Mammary epithelial cell (primary cell): ENCODE measurements at regions of chr6 and their contacts with region 1.

Region 1: GRCh38 chr6:4155848-4156466 is 20.6 kb upstream of the ECI2 start:
- DNase-seq: peak; percentile 78
- H3K4me3 ChIP-seq: no peak overlapping the region
- H3K27ac ChIP-seq: no peak overlapping the region
- H3K4me1 ChIP-seq: peaks cover 5% of the 10 kb centered on the region
- H3K27me3 ChIP-seq: no peaks in the 10 kb centered on the region
- CTCF ChIP-seq: peak; percentile 78 to 79

Region 2: DNA sequence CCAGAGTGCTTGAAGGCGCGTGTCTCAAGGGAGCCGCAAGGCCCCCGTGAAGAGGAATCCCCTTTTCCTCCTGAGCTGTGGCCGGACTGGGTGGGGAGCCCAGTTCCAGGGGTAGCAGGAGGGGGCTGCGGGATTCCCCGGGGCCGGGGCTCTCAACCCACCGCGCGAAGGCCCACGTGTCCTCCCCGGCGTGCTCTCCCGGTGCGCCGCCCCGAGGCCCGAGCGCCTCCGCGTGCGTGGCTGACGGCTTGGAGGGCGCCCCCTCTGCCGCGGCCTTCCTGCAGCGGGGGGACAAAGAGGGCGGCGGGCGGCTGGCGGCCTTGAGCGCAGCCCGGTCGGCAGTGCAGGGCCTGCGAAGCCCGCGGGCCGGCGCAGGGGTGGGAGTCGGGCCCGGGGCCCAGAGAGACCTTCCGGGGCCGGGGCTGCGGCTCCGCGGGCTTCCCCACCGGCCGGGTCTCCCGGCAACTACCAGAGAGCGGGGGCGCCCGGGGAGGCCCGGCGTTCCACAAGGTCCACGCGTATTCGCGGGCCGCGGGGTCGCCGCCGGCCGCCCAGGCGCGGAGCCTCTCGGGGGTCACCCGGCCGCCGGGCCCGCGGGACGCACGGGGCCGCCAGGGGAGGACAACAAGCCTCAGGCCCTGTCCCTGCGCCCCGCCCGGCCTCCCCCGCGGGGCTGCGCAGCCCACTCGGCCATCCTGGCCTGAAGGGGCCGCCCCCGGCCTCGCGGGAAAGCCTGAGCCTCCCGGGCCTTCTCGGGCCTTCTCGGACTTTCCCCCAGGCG is 77.1 kb before region 1 on chr6 and contains the start of gene FAM217A:
- CTCF ChIA-PET with region 1: no interaction called
- dilution Hi-C with region 1: no loop called
- in situ Hi-C with region 1: no loop called
- intact Hi-C with region 1: no loop called
- DNase-seq: no peak
- H3K4me3 ChIP-seq: no peak within 1 kb of the TSS
- H3K27ac ChIP-seq: no peak within 1 kb of the TSS
- H3K4me1 ChIP-seq: no peaks in the 10 kb centered on the region
- H3K27me3 ChIP-seq: no peaks in the 10 kb centered on the region
- CTCF ChIP-seq: no peak
- total RNA-seq, gene FAM217A: not detected

Region 3: DNA sequence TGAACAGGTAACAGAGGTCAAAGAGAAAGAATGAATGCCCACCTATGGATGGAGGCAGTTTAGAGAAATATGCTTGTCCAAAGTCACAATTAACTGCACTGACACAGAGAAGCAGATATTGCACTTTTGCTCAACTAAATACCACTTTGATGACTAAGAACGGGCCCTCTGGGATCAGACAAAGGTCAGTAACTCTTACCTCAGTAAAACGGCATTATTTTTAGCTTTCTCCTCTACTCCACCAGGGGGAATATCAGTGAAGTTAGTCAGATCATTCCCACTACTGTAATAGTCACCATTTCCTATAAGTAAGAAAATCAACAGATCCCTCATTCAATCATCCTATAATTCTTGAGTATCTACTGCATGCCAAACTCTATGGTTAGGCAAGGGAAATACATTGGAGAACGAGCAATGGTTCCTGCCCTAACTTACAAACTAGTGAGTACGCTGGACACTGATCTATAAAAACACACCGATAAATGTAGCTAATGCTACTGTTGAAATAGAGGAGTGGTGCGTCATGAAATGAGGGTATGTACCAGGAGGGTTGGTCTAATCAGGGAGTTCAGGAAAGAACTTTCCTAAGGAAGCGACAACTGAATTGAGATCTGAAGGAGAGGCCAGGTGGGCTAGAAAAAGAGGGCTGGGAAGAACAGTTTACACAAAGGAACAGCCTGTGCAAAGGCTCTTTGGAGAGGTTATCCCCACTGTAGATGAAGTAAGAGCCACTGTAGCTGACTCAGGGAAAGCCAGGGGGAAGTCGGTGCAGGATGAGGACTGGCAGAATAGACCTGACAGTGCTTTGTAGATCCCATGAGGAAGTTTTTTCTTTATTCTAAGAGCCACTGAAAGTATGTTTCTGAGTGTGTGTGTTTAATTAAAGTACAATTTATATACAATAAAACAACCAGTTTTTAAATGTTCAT is 29.8 kb before region 1 on chr6:
- CTCF ChIA-PET with region 1: no interaction called
- dilution Hi-C with region 1: no loop called
- in situ Hi-C with region 1: no loop called
- intact Hi-C with region 1: loop called (anchors 1 kb)
- DNase-seq: peak; percentile 77
- H3K4me3 ChIP-seq: no peak overlapping the region
- H3K27ac ChIP-seq: no peak overlapping the region
- H3K4me1 ChIP-seq: peaks cover 17% of the 10 kb centered on the region
- H3K27me3 ChIP-seq: no peaks in the 10 kb centered on the region
- CTCF ChIP-seq: peak; percentile 39 to 42